ENCODE measurements at regions of chr1 and their contacts with region 1.

Region 1: GRCh38 chr1:17125756-17126237 is 6.5 kb upstream of the PADI2 start:
- DNase-seq: peak; percentile 11
- H3K4me3 ChIP-seq: no peak overlapping the region
- H3K27me3 ChIP-seq: no peaks in the 10 kb centered on the region
- CTCF ChIP-seq: peak; percentile 95

Region 2: GRCh38 chr1:17168091-17168876 is 42.5 kb after region 1 on chr1:
- CTCF ChIA-PET with region 1: interaction called, 34 read pairs
- POLR2A ChIA-PET with region 1: no interaction called
- DNase-seq: peak; percentile 82
- H3K4me3 ChIP-seq: no peak overlapping the region
- H3K27me3 ChIP-seq: no peaks in the 10 kb centered on the region
- CTCF ChIP-seq: no peak

Region 3: GRCh38 chr1:17236779-17237560 is 111.2 kb after region 1 on chr1:
- CTCF ChIA-PET with region 1: interaction called, 347 read pairs
- POLR2A ChIA-PET with region 1: interaction called, 4 read pairs
- DNase-seq: peak; percentile 28
- H3K4me3 ChIP-seq: no peak overlapping the region
- H3K27me3 ChIP-seq: no peaks in the 10 kb centered on the region
- CTCF ChIP-seq: peak; percentile 73

Region 4: DNA sequence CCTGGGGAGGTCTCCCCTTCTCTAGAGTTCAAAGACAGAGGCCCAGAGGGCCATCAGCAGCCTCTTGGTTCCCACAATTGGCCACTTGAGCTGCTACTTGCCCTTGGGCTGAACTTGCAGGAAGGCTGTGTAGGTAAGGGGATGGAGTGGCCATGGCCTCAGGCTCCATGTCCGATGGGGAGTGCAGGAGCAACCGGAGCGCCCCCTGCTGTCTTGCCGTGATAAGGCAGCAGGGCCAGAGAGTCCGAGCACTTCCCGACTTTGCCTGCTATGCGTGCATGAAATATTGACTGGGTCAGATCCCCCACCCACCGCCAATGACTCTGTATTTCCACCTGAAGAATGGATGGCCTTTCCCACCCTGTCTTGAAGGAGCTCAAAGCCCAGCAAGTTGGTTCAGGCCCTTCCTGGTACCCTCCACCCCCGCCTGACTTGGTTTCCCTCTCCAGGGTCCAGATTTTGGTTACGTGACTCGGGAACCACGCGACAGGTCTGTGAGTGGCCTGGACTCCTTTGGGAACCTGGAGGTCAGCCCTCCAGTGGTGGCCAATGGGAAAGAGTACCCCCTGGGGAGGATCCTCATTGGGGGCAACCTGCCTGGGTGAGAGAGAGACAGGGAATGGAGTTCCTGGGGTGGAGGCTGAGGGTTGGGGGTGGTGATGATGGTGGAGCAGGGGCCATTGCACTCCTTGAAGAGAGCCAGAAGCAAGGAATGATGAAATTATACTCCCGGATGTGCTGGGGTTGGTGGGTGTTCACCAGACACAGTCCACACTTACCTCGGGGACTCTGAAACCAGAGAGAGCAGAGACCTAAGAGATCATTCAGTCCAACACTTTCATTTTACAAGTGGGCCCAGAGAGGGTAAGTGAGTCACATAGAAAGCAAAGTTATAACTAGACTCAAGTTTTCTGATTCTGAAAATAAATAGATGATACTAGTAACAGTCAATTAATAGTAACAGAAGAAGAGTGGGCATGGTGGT is 148.7 kb after region 1 on chr1:
- CTCF ChIA-PET with region 1: interaction called, 20 read pairs
- POLR2A ChIA-PET with region 1: no interaction called
- DNase-seq: no peak
- H3K4me3 ChIP-seq: no peak overlapping the region
- H3K27me3 ChIP-seq: no peaks in the 10 kb centered on the region
- CTCF ChIP-seq: peak; percentile 78

Region 5: DNA sequence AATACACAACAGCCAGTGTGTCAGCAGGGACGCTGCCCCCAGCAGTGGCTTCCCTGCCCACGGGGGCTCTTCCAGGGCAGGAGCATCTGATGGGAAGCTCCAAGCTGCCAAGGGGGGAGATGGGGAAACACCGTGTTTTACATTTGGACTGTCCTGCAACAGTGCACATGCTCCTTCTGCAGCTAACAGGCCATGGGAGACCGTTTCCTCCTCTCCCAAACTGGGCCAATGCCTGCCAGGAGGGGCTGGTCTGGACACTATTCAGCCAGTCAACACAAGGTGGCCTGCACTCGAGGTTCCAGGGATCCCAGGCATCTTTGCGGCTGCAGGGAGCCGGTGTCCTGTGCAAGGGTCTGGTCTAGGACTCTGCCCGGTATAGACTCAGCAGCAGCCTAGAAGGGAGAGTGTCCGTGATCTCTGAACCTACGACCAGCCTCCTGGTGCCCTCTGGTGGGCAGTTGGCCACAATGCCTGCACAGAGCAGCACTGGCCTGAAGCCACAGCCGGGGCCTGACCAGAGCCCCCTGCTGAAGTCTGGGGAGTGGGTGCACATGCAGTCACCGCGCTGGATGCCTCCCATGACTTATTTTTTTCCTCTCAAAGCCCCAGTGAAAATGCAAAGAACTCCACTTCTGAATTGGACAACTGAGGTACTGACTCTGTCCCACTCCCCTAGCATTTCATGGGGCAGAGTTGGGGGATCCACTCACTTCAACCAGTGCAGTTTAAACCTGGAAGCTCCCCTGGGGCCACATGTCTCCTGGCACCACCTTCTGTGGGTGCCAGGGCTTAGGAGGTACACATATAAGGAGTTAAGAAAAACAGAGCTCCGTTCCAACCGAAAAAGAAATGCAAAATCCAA is 280.3 kb after region 1 on chr1:
- CTCF ChIA-PET with region 1: interaction called, 14 read pairs
- POLR2A ChIA-PET with region 1: no interaction called
- DNase-seq: no peak
- H3K4me3 ChIP-seq: no peak overlapping the region
- H3K27me3 ChIP-seq: no peaks in the 10 kb centered on the region
- CTCF ChIP-seq: peak; percentile 86

Region 6: DNA sequence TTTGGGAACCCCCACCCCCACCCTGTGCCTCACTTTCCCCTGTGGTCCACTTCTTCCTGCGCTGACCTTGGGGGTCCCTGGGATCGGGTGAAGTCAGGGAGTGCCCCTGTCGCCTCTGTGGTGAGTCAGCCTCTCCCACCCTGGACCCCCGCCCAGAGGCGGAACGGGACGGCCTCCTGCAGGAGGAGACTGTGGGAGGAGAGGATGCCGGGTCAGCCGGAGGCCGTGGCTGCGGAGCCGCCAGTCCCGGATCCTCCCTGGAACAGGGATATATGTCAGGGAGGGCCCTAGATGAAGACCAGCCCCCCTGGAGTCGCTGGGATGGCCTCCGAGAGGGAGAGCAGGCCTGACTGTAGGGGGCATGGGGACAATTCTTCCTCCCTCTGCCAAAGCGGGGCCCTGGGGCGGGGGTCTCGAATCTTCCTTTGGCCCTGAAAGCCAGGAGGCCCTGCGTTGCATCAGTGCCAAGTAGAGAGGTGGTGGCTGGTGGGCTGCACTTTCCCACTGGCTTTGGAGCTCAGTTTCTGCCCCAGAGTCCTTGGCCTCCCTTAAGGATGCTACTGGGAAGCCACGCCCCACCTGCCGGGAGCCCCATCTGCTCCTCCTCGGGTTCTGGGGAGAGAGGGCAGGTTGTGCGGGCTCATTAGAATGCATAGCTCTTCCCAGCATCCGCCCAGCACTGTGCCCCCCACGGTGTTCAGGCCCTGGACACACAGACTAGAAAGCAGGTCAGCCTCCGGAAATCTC is 414.6 kb after region 1 on chr1:
- CTCF ChIA-PET with region 1: no interaction called
- POLR2A ChIA-PET with region 1: no interaction called
- DNase-seq: no peak
- H3K4me3 ChIP-seq: peak overlapping the region; percentile 72
- H3K27me3 ChIP-seq: no peaks in the 10 kb centered on the region
- CTCF ChIP-seq: peak; percentile 9; the same call in 1 of the 2 replicates

Measured in BJ (cell line).